ENCODE measurements at regions of chr5 and their contacts with region 1.

Region 1: DNA sequence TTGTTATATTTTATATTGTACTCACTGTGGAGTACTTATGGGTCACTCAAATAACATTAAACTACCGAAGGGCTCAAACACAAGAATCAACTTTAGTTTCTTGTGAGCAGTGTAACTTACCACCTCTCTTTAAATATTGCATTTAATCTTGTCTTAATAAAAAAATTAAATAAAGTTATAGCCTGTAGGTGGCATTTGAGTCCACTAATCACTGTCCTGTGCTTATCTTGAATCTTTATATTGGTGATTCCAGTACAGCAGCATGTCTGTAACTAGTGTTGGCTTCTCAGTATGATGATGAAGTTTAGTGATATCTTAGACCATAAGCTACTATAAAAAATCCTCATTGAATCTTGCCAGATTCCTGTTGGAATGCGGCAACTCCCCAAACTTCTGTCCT is 313.8 kb downstream of the FAM170A start:
- DNase-seq: no peak
- H3K4me3 ChIP-seq: no peak overlapping the region
- H3K27ac ChIP-seq: no peak overlapping the region
- H3K4me1 ChIP-seq: no peaks in the 10 kb centered on the region
- H3K27me3 ChIP-seq: no peaks in the 10 kb centered on the region
- CTCF ChIP-seq: peak in 3 of 4 experiments; percentile 38 to 77 (median 54)
- POLR2A ChIP-seq: no peak

Region 2: GRCh38 chr5:118354797-118355196 is 1588.4 kb before region 1 on chr5:
- intact Hi-C with region 1: no loop called
- DNase-seq: no peak
- H3K4me3 ChIP-seq: no peak overlapping the region
- H3K27ac ChIP-seq: no peak overlapping the region
- H3K4me1 ChIP-seq: no peaks in the 10 kb centered on the region
- H3K27me3 ChIP-seq: no peaks in the 10 kb centered on the region
- CTCF ChIP-seq: no peak
- POLR2A ChIP-seq: no peak

Region 3: DNA sequence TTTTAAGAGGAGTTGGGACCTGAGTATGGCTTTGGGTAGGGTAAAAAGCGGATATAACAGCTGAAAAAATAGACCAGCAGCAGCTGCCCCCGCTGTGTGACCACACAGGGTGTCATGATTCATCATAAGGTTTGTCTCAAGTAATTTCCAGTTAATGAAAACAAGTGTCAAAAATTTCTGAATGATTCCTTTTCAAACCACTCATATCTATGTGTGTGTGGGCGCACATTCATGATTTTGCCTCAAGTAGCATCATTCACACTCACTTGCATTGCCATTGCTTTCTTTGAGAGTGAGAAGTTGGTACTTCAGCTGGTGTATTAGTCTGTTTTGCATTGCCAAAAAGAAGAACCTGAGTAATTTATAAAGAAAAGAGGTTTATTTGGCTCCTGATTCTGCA is 599.4 kb before region 1 on chr5:
- intact Hi-C with region 1: no loop called
- DNase-seq: no peak
- H3K4me3 ChIP-seq: no peak overlapping the region
- H3K27ac ChIP-seq: no peak overlapping the region
- H3K4me1 ChIP-seq: no peaks in the 10 kb centered on the region
- H3K27me3 ChIP-seq: no peaks in the 10 kb centered on the region
- CTCF ChIP-seq: no peak
- POLR2A ChIP-seq: no peak

Region 4: GRCh38 chr5:120457839-120458507 is 514.8 kb after region 1 on chr5:
- intact Hi-C with region 1: loop called (anchors 5 kb)
- DNase-seq: peak; percentile 62
- H3K4me3 ChIP-seq: peak overlapping the region in 1 of 2 donors; percentile 8
- H3K27ac ChIP-seq: no peak overlapping the region
- H3K4me1 ChIP-seq: no peaks in the 10 kb centered on the region
- H3K27me3 ChIP-seq: no peaks in the 10 kb centered on the region
- CTCF ChIP-seq: peak in 3 of 4 experiments; percentile 53 to 71 (median 58)
- POLR2A ChIP-seq: no peak

Region 5: GRCh38 chr5:120803282-120803681 is 860.1 kb after region 1 on chr5:
- intact Hi-C with region 1: loop called (anchors 10 kb)
- DNase-seq: no peak
- H3K4me3 ChIP-seq: no peak overlapping the region
- H3K27ac ChIP-seq: no peak overlapping the region
- H3K4me1 ChIP-seq: no peaks in the 10 kb centered on the region
- H3K27me3 ChIP-seq: no peaks in the 10 kb centered on the region
- CTCF ChIP-seq: peak in 2 of 4 experiments; percentile 27 to 30
- POLR2A ChIP-seq: no peak

Measured in prostate gland (tissue), 2 donors.